Pancreas (tissue), 10 donors: ENCODE measurements at regions of chr19 and their contacts with region 1.

Region 1: DNA sequence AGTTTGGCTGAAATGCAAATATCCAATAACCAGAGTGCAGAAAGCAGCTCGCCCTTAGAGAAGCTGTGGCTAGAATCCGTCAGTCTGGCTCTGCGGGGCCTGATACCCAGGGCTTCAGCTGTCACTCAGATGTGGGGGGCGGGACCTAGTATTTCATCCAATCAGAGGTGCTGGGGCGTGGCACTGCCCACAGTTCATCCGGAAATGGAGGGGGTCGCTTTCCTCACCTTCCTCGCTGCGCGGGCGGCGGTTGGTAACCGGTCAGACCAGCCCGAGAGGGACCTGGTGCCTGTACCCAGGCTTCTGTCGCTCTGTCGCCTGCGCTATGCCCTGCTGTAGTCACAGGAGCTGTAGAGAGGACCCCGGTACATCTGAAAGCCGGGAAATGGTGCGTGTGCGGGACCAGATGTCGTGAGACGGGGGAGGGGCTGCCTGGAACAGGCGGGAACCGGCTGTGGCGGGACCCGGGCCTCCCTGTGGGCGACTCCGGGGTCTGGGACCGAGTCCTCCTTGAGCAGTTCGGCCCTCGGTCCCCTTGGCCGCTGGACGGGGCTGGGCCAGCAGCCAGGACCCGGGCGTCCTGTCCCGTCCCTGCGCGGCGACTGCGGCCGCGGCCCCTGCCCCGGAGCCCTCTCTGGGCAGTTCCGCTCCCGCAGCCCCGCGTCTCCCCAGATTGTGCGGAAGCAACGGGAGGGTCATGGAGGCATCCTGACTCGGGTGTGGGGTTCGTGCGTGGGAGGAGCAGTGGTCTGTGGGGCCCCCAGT is at the start of gene ZNF700:
- DNase-seq: peak; percentile 91 to 97 (median 96)
- ATAC-seq: peak; percentile 92 to 98 (median 96)
- H3K4me3 ChIP-seq: peak within 1 kb of the TSS; percentile 67 to 93 (median 76)
- H3K27ac ChIP-seq: peak within 1 kb of the TSS; percentile 88 to 98 (median 97)
- H3K4me1 ChIP-seq: peaks cover 6 to 22% (median 15%) of the 10 kb centered on the region in 3 donors
- H3K27me3 ChIP-seq: no peaks in the 10 kb centered on the region
- CTCF ChIP-seq: no peak
- total RNA-seq, gene ZNF700: 6.5 to 10.9 (median 7.7) TPM

Region 2: GRCh38 chr19:11987405-11988281 is 62.6 kb after region 1 on chr19:
- intact Hi-C with region 1: loop called in 1 of 3 experiments (anchors 10 kb)
- DNase-seq: peak; percentile 92 to 97 (median 94)
- ATAC-seq: peak; percentile 96 to 100 (median 98)
- H3K4me3 ChIP-seq: peak overlapping the region; percentile 42 to 82 (median 52)
- H3K27ac ChIP-seq: peak overlapping the region; percentile 64 to 80 (median 72)
- H3K4me1 ChIP-seq: peaks cover 0 to 2% (median 0%) of the 10 kb centered on the region in 3 donors
- H3K27me3 ChIP-seq: no peaks in the 10 kb centered on the region
- CTCF ChIP-seq: no peak

Region 3: GRCh38 chr19:12075538-12076139 is 150.6 kb after region 1 on chr19:
- intact Hi-C with region 1: no loop called
- DNase-seq: no peak
- ATAC-seq: no peak
- H3K4me3 ChIP-seq: no peak overlapping the region
- H3K27ac ChIP-seq: no peak overlapping the region
- H3K4me1 ChIP-seq: no peaks in the 10 kb centered on the region
- H3K27me3 ChIP-seq: no peaks in the 10 kb centered on the region
- CTCF ChIP-seq: no peak